ENCODE measurements at regions of chr9 and their contacts with region 1.

Region 1: DNA sequence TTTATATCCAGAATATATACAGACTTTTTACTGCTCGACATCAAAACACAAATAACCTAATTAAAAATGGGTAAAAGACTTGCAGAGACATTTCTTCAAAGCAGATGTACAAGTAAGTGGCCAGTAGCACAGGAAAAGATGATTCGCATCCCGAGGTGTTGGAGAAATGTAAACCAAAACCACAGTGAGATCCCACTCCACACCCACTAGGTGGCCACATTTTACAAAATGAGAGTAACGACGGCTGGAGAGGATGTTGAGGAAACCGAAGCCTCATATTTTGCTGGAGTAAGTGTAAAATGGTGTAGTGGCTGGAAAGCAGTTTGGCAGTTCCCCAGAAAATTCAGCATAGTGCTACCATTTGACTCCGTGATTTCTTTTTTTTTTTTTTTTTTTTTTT is 21.2 kb upstream of the GBGT1 start:
- DNase-seq: peak; percentile 78
- ATAC-seq: peak; percentile 80
- H3K4me3 ChIP-seq: no peak overlapping the region
- H3K27ac ChIP-seq: no peak overlapping the region
- H3K4me1 ChIP-seq: 0 out of 2 replicates have a peak, but pooled peaks cover 4% of the 10 kb centered on the region
- H3K27me3 ChIP-seq: no peaks in the 10 kb centered on the region
- CTCF ChIP-seq: peak; percentile 61

Region 2: DNA sequence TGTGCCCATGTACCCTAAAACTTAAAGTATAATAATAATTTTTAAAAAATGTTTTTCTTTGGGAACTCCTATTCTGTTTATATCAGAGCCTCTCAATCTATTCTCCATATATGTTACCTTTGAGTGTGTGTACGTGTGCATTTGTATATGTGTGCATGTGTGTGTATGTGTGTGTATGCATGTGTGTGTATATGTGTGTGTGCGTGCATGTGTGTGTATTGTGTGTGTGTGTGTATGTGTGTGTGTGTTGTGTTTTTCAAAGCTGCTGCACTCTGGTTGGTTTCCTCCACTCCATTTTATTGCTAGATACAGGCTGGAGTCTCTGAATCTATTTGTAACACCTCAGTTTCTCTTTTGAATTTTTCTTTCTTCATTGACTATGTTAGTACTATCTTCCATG is 131.0 kb after region 1 on chr9:
- CTCF ChIA-PET with region 1: no interaction called
- POLR2A ChIA-PET with region 1: no interaction called
- intact Hi-C with region 1: no loop called
- DNase-seq: no peak
- ATAC-seq: no peak
- H3K4me3 ChIP-seq: no peak overlapping the region
- H3K27ac ChIP-seq: no peak overlapping the region
- H3K4me1 ChIP-seq: no peaks in the 10 kb centered on the region
- H3K27me3 ChIP-seq: no peaks in the 10 kb centered on the region
- CTCF ChIP-seq: no peak

Region 3: DNA sequence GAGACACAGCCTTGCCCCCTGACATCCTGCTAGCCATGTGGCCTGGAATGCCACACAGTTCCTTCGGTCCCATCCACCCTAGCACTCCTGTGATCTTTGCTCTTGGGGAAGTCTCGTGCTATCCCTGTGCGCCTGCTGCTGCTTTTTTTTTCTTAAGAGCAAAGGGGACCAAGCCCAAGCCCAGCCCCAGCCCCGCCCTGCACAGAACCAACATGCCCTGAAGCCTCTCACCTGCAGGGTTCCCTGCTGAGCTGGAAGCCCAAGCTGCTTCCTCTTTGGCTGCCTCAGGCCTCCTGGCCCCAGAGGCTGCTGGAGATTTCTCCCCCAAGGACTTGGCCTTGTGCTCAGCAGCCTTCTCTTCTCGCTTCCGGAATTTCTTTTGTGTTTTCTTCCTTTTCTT is 149.2 kb after region 1 on chr9:
- CTCF ChIA-PET with region 1: interaction called, 9 read pairs
- POLR2A ChIA-PET with region 1: no interaction called
- intact Hi-C with region 1: loop called (anchors 1 kb)
- DNase-seq: peak; percentile 28
- ATAC-seq: no peak
- H3K4me3 ChIP-seq: peak overlapping the region; percentile 99; the same call in 1 of the 2 replicates
- H3K27ac ChIP-seq: no peak overlapping the region
- H3K4me1 ChIP-seq: peaks cover 17% of the 10 kb centered on the region
- H3K27me3 ChIP-seq: no peaks in the 10 kb centered on the region
- CTCF ChIP-seq: no peak

Region 4: DNA sequence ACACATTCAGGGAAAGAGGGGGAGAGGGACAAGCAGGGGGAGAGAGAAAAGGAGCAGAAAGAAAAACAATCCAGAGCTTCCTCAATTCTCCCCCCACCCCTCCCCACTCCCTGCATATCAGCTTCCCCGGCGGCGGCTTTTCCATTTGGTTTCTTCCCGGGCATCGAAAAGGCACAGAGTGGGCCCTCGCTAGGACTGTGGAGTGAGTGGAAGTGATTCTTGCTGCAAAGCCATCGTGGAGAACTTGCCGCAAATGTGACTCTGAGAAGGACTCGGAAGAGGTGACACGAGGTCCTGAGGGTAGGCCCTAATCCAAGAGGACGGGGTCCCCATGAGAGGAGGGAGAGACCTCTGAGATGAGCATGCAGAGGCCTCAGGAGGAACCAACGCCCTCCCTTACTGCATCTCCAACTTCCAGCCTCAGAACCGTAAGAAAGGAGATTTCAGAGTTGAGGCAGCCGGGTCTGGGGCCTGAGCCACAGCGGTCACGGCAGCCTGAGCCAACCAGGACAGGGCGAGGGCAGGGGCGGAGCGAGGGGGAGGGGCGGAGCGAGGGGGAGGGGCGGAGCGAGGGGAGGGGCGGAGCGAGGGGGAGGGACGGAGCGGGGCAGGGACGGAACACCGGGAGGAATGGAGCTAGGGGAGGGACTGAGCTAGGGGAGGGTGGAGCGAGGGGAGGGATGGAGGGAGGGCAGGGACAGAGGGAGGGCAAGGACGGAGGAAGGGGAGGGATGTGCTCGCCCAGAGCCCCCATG is 574.4 kb after region 1 on chr9:
- CTCF ChIA-PET with region 1: no interaction called
- POLR2A ChIA-PET with region 1: no interaction called
- intact Hi-C with region 1: no loop called
- DNase-seq: no peak
- ATAC-seq: no peak
- H3K4me3 ChIP-seq: no peak overlapping the region
- H3K27ac ChIP-seq: no peak overlapping the region
- H3K4me1 ChIP-seq: no peaks in the 10 kb centered on the region
- H3K27me3 ChIP-seq: no peaks in the 10 kb centered on the region
- CTCF ChIP-seq: no peak

Measured in PC-3 (cell line).